ENCODE measurements at regions of chr22 and their contacts with region 1.

Region 1: GRCh38 chr22:38941488-38941987 is 15.9 kb upstream of the APOBEC3A start:
- DNase-seq: peak; percentile 37
- H3K4me3 Mint-ChIP-seq: peak overlapping the region; percentile 58
- H3K27ac Mint-ChIP-seq: peak overlapping the region; percentile 83
- H3K4me1 Mint-ChIP-seq: peaks cover 44% of the 10 kb centered on the region
- H3K27me3 Mint-ChIP-seq: peaks cover 20% of the 10 kb centered on the region

Region 2: GRCh38 chr22:38755911-38756532 is 185.5 kb before region 1 on chr22 and contains the start of gene SUN2:
- intact Hi-C with region 1: loop called (anchors 1 kb)
- DNase-seq: peak; percentile 94
- H3K4me3 Mint-ChIP-seq: peak within 1 kb of the TSS; percentile 95
- H3K27ac Mint-ChIP-seq: peak within 1 kb of the TSS; percentile 97
- H3K4me1 Mint-ChIP-seq: peaks cover 59% of the 10 kb centered on the region
- H3K27me3 Mint-ChIP-seq: no peaks in the 10 kb centered on the region
- total RNA-seq, gene SUN2: 146 and 154 TPM in 2 replicates

Region 3: GRCh38 chr22:38872172-38872830 is 69.2 kb before region 1 on chr22 and contains the start of gene CBX6:
- intact Hi-C with region 1: loop called (anchors 1 kb)
- DNase-seq: peak; percentile 94
- H3K4me3 Mint-ChIP-seq: peak within 1 kb of the TSS; percentile 89
- H3K27ac Mint-ChIP-seq: peak within 1 kb of the TSS; percentile 91
- H3K4me1 Mint-ChIP-seq: peaks cover 59% of the 10 kb centered on the region
- H3K27me3 Mint-ChIP-seq: peaks cover 2% of the 10 kb centered on the region
- total RNA-seq, gene CBX6: 171 and 178 TPM in 2 replicates

Region 4: DNA sequence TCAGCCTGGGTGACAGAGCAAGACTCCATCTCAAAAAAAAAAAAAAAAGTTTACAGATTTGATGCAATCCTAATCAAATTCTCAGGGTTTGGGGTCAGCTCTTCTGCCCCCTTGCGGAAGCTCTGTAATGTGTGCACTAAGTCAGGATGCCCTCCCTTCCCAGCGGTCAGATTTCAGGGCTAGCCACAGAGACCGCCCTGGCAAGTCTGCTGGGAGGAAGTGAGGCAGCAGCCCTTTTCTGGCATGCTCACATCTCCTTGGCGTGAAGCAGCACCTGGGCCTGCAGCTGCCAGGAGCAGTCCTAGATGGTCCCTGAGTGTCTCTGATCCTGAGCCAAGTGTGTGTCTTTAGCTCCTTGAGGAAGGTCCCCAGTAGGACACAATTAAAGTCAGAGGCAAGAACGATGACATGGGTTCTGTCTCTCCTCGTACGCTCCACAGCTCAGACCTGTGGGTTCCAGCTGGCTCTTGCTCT is 61.7 kb after region 1 on chr22:
- intact Hi-C with region 1: loop called (anchors 5 kb)
- DNase-seq: peak; percentile 68
- H3K4me3 Mint-ChIP-seq: no peak overlapping the region
- H3K27ac Mint-ChIP-seq: no peak overlapping the region
- H3K4me1 Mint-ChIP-seq: peaks cover 8% of the 10 kb centered on the region
- H3K27me3 Mint-ChIP-seq: peaks cover 18% of the 10 kb centered on the region

Region 5: GRCh38 chr22:39117585-39118191 is 176.2 kb after region 1 on chr22:
- intact Hi-C with region 1: loop called (anchors 1 kb)
- DNase-seq: peak; percentile 53
- H3K4me3 Mint-ChIP-seq: peak overlapping the region; percentile 45
- H3K27ac Mint-ChIP-seq: peak overlapping the region; percentile 86
- H3K4me1 Mint-ChIP-seq: peaks cover 61% of the 10 kb centered on the region
- H3K27me3 Mint-ChIP-seq: no peaks in the 10 kb centered on the region

Measured in activated T-helper 1 cell treated with anti-CD3 and anti-CD28 coated beads, Interleukin-12 subunit alpha, Interleukin-12 subunit beta, Interleukin-2, Interleukin-4 antibody, amounts not matched to agents 30 ng/mL and 10 ng/mL and 1 ng/mL, durations not matched to agents 14 hours and 24 hours and 36 hours (primary cell).